ENCODE measurements at regions of chr12 and their contacts with region 1.

Region 1: DNA sequence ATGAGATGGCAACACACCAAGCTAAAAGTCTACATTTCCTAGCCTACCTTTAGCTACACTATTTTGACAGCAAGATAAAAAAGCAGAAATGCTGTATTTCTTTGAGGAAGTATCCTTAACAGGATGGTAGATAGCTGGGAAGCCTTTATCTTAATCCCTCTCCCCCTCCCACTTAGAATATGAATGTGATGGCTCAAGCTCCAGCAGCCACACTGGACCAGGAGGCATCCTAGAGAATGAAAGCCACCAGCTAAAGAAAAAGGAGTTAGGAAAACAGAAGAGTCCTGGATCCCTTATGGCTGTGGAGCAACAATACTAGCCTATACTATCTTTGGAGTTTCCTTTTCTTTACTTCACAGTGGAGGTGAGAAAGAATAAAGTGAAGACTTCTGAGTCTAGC is 15.1 kb downstream of the NAP1L1 start:
- DNase-seq: no peak
- CTCF ChIP-seq: no peak

Region 2: GRCh38 chr12:76083904-76084862 is 14.8 kb after region 1 on chr12 and contains the start of gene NAP1L1:
- CTCF ChIA-PET with region 1: interaction called, 22 read pairs
- POLR2A ChIA-PET with region 1: no interaction called
- DNase-seq: peak; percentile 97
- CTCF ChIP-seq: no peak

Region 3: DNA sequence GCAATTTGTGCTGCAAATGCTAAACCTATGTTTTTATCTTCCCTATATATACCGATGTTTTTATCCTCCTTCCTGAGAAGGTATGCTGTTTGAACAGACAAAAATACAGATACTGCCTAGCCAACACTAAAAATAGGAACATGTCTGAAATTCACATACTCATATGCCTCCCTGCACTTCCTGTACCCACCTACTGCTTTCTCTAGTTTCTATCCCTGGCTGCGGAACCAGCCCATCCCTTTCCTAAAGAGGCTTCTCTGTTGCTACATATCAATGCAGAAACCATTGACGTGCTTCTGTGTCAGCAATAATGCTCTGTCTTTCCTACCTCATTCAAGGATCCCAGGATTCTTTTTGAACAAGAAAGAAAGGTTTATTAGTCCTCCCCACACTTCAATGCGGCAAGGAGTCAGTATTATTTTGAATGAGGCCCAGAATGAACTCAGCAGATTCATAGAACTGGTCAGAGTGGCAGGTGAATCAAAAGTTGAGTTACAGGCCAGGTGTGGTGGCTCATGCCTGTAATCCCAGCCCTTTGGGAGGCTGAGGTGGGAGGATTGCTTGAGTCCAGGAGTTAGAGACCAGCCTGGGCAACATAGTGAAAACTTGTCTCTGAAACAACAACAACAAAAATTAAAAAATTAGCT is 82.9 kb after region 1 on chr12:
- CTCF ChIA-PET with region 1: no interaction called
- POLR2A ChIA-PET with region 1: no interaction called
- DNase-seq: peak; percentile 49
- CTCF ChIP-seq: no peak

Region 4: GRCh38 chr12:76190299-76190698 is 121.0 kb after region 1 on chr12:
- CTCF ChIA-PET with region 1: no interaction called
- POLR2A ChIA-PET with region 1: no interaction called
- DNase-seq: no peak
- CTCF ChIP-seq: no peak